CD4-positive, alpha-beta T cell (primary cell): ENCODE measurements at regions of chr4 and their contacts with region 1.

Region 1: DNA sequence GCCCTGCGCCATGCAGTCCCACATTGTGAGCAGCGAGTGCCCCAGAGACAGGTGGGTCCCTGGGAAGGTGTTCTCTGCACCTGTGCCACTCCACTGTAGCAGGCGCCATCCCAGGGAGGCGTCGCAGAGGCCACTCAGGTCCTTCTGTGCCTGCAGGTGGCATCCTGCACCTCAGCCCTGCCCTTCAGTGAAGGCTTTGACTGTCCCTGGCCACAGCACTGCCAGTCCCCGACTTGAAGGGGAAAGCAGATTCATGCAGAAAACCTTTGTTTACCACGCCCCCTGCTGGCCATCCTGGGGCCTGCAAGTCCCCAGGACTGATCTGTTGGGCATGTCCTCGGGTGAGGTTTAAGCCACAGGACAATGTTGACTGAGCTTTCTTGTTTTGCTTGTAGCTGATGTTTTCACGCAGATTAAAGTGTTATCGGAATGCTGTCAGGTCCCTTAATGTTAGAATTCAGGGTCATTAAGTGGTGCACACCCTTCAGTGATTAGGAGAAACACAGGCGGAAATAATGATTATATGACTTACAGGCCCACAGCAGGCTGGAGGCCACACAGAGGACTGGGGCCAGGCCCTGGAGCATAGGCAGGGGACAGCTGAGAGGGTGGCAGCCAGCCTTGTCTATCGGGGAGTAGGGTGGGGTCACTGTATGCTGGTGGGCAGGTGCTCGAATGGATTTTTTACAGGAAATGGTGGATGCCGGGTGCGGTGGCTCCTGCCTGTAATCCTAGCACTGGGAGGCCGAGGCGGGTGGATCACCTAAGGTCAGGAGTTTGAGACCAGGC is 5.0 kb downstream of the TACC3 start:
- DNase-seq: peak; percentile 84 to 96 (median 90)
- ATAC-seq: peak; percentile 37
- H3K4me3 ChIP-seq: no peak overlapping the region
- H3K4me3 Mint-ChIP-seq: peak overlapping the region; percentile 31
- H3K27ac ChIP-seq: no peak overlapping the region
- H3K27ac Mint-ChIP-seq: peak overlapping the region; percentile 63
- H3K4me1 ChIP-seq: peaks cover 95% of the 10 kb centered on the region
- H3K4me1 Mint-ChIP-seq: peaks cover 57% of the 10 kb centered on the region
- H3K27me3 ChIP-seq: no peaks in the 10 kb centered on the region
- H3K27me3 Mint-ChIP-seq: no peaks in the 10 kb centered on the region
- CTCF ChIP-seq: peak; percentile 96

Region 2: GRCh38 chr4:1463088-1463926 is 263.0 kb before region 1 on chr4:
- CTCF ChIA-PET with region 1: no interaction called
- POLR2A ChIA-PET with region 1: no interaction called
- intact Hi-C with region 1: no loop called
- DNase-seq: peak in 1 of 14 experiments; percentile 9
- ATAC-seq: no peak
- H3K4me3 ChIP-seq: no peak overlapping the region
- H3K4me3 Mint-ChIP-seq: no peak overlapping the region
- H3K27ac ChIP-seq: no peak overlapping the region
- H3K27ac Mint-ChIP-seq: no peak overlapping the region
- H3K4me1 ChIP-seq: no peaks in the 10 kb centered on the region
- H3K4me1 Mint-ChIP-seq: no peaks in the 10 kb centered on the region
- H3K27me3 ChIP-seq: peaks cover 22 to 34% of the 10 kb centered on the region in 2 experiments
- H3K27me3 Mint-ChIP-seq: peaks cover 28% of the 10 kb centered on the region
- CTCF ChIP-seq: no peak

Region 3: GRCh38 chr4:1693129-1693896 is 33.0 kb before region 1 on chr4:
- CTCF ChIA-PET with region 1: interaction called, 84 read pairs
- POLR2A ChIA-PET with region 1: interaction called, 128 read pairs
- intact Hi-C with region 1: loop called (anchors 1 kb)
- DNase-seq: peak; percentile 63 to 91 (median 75)
- ATAC-seq: peak; percentile 93
- H3K4me3 ChIP-seq: no peak overlapping the region
- H3K4me3 Mint-ChIP-seq: no peak overlapping the region
- H3K27ac ChIP-seq: peak overlapping the region in 1 of 2 donors; percentile 17
- H3K27ac Mint-ChIP-seq: peak overlapping the region; percentile 68
- H3K4me1 ChIP-seq: peaks cover 5% of the 10 kb centered on the region
- H3K4me1 Mint-ChIP-seq: peaks cover 5% of the 10 kb centered on the region
- H3K27me3 ChIP-seq: no peaks in the 10 kb centered on the region
- H3K27me3 Mint-ChIP-seq: no peaks in the 10 kb centered on the region
- CTCF ChIP-seq: peak; percentile 87